ENCODE measurements at regions of chr10 and their contacts with region 1.

Region 1: GRCh38 chr10:79424221-79425073 is 21.0 kb downstream of the ZCCHC24 start:
- DNase-seq: peak; percentile 70 to 77
- H3K4me3 ChIP-seq: no peak overlapping the region
- H3K4me3 Mint-ChIP-seq: no peak overlapping the region
- H3K27ac Mint-ChIP-seq: peak overlapping the region; percentile 64
- H3K4me1 ChIP-seq: peaks cover 11% of the 10 kb centered on the region
- H3K4me1 Mint-ChIP-seq: peaks cover 11% of the 10 kb centered on the region
- H3K27me3 ChIP-seq: no peaks in the 10 kb centered on the region
- H3K27me3 Mint-ChIP-seq: no peaks in the 10 kb centered on the region
- CTCF ChIP-seq: no peak

Region 2: GRCh38 chr10:79445141-79445976 is 20.9 kb after region 1 on chr10 and contains the start of gene ZCCHC24:
- CTCF ChIA-PET with region 1: no interaction called
- POLR2A ChIA-PET with region 1: no interaction called
- intact Hi-C with region 1: loop called (anchors 2 kb)
- DNase-seq: peak; percentile 97
- H3K4me3 ChIP-seq: peak within 1 kb of the TSS; percentile 77
- H3K4me3 Mint-ChIP-seq: peak within 1 kb of the TSS; percentile 78
- H3K27ac Mint-ChIP-seq: no peak within 1 kb of the TSS
- H3K4me1 ChIP-seq: peaks cover 9% of the 10 kb centered on the region; the same call in 1 of the 2 replicates
- H3K4me1 Mint-ChIP-seq: peaks cover 26% of the 10 kb centered on the region
- H3K27me3 ChIP-seq: no peaks in the 10 kb centered on the region
- H3K27me3 Mint-ChIP-seq: no peaks in the 10 kb centered on the region
- CTCF ChIP-seq: no peak
- total RNA-seq, gene ZCCHC24: 2.5 and 3.1 TPM in 2 replicates